ENCODE measurements at regions of chr9 and their contacts with region 1.

Region 1: DNA sequence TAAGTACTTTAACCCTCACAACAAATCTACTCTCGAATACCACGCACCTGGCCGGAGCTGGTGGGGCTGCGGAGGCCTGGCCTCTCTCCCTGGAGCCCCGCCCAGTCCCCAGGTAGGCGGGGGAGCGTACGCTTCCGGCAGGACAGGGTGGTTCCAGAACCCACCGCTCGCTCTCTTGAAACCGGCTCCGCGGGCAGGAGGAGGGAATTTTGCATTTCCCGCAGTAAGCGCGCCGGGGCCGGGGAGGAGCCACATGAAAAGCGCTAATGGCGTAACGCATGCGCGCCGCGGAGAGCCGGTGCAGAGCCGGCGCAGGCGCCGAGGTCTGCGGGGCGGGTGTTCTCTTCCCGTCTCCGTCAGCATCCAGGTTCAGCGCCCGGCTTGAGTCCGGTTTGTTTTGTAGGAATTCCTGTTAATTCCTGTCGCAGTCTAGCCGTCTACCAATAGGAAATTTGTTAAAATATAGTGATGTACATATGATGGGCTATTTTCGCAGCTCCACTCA is 20.8 kb downstream of the CAVIN4 start:
- DNase-seq: peak; percentile 64 to 95 (median 90)
- ATAC-seq: peak; percentile 84
- H3K4me3 ChIP-seq: peak overlapping the region; percentile 29 to 44
- H3K27ac ChIP-seq: peak overlapping the region; percentile 43 to 53
- H3K4me1 ChIP-seq: peaks cover 0 to 4% of the 10 kb centered on the region in 2 donors
- H3K27me3 ChIP-seq: no peaks in the 10 kb centered on the region
- CTCF ChIP-seq: no peak

Region 2: GRCh38 chr9:100352727-100353505 is 245.8 kb before region 1 on chr9 and contains the start of gene TEX10:
- intact Hi-C with region 1: loop called in 1 of 2 experiments (anchors 10 kb)
- DNase-seq: peak; percentile 90 to 97 (median 93)
- ATAC-seq: peak; percentile 99
- H3K4me3 ChIP-seq: peak within 1 kb of the TSS; percentile 83 to 85
- H3K27ac ChIP-seq: peak within 1 kb of the TSS; percentile 73 to 83
- H3K4me1 ChIP-seq: peaks cover 12 to 20% of the 10 kb centered on the region in 2 donors
- H3K27me3 ChIP-seq: no peaks in the 10 kb centered on the region
- CTCF ChIP-seq: no peak
- polyA plus RNA-seq, gene TEX10: 39.0 to 46.8 (median 43.2) TPM